Naive thymus-derived CD8-positive, alpha-beta T cell (primary cell): ENCODE measurements at regions of chr3 and their contacts with region 1.

Region 1: DNA sequence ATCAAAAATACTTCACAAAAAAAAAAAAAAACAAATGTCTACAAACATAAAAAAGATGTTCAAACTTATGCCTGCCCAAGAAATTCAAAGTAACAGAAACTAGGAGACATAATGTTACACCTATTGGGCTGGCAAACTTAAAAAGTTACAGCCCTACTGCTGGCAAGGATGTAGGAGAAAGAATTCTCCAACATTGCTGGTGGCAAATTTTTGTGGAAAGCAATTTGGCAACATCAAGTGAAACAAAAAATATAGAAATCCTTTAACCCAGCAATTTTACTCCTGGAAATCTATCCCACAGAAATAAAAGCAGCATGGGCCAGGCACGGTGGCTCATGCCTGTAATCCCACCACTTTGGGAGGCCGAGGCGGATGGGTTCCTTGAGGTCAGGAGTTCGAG is 73.2 kb downstream of the STAG1 start:
- DNase-seq: no peak
- ATAC-seq: no peak
- H3K4me3 Mint-ChIP-seq: no peak overlapping the region
- H3K27ac Mint-ChIP-seq: peak overlapping the region in 1 of 10 donors; percentile 46
- H3K4me1 Mint-ChIP-seq: peaks cover 12 to 54% (median 30%) of the 10 kb centered on the region in 4 donors
- H3K27me3 Mint-ChIP-seq: no peaks in the 10 kb centered on the region

Region 2: DNA sequence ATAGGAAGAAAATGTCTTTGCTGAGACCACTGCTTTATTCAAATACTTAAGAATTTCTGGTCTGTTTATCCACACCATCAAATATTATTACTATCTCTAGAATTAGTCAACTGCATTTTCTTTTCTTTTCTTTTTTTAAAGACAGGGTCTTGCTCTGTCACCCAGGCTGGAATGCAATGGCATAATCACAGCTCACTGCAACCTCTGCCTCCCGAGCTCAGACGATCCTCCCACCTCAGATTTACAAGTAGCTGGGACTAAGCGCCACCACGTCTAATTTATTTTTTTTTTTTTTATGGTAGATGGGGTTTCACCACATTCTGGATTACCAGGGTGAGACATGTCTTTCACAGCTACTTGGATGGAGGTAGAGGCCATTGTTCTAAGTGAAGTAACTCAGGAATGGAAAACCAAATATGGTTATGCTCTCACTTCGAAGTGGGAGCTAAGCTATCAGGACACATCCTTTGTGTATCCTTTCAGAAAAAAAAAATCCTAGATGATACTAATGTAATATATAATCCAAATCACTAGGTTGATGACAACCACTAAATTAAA is 20.4 kb after region 1 on chr3:
- POLR2A ChIA-PET with region 1: interaction called, 12 read pairs
- DNase-seq: no peak
- ATAC-seq: no peak
- H3K4me3 Mint-ChIP-seq: no peak overlapping the region
- H3K27ac Mint-ChIP-seq: no peak overlapping the region
- H3K4me1 Mint-ChIP-seq: peaks cover 11 to 67% (median 29%) of the 10 kb centered on the region in 4 donors
- H3K27me3 Mint-ChIP-seq: no peaks in the 10 kb centered on the region

Region 3: DNA sequence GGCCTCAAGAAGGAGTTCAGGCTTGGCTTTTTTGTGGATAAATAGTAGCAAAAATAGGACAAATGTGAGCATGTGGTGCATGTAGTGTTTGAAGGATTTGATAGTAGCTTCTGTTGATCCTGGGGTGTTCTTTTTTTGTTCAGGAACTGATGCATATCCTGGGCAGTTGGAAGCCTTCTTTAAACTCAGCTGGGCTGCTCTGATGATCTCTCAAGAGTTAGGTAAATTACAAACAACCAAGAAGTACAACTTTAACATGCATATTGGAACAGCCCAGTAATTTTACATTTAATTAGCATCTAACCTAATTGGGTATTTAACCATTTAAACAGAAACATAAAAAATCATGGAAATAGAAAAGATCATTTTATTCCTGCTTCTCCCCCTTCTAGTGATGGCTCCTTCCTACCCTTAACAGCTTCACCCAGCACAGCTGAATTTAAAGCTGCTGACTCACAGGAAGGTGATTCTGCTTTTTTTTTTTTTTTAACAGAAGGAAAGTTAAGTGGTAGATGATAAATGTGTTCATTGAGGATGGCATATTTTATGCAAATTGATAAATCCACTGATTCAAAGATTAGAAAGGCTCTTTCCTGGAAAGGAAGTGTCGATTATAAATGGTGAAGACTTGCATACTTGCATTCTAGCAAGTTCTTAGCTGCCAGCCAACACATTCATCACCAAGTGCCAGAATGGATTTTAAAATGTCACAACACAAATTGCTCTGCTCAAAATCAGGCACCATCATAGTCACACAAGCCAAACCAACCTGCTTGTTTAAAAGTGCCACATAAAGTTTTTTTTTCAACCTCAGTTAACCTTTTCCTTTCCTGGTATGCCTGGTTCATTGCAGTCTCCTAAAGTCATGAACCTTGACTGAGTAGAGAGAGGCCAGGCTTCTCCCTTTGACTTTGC is 159.9 kb after region 1 on chr3:
- POLR2A ChIA-PET with region 1: no interaction called
- DNase-seq: no peak
- ATAC-seq: no peak
- H3K4me3 Mint-ChIP-seq: no peak overlapping the region
- H3K27ac Mint-ChIP-seq: peak overlapping the region in 1 of 10 donors; percentile 25
- H3K4me1 Mint-ChIP-seq: peaks cover 0 to 8% (median 4%) of the 10 kb centered on the region in 4 donors
- H3K27me3 Mint-ChIP-seq: no peaks in the 10 kb centered on the region